CD4-positive, alpha-beta T cell (primary cell): ENCODE measurements at regions of chr9 and their contacts with region 1.

Region 1: GRCh38 chr9:130042833-130043653 is at the start of gene FNBP1:
- DNase-seq: peak; percentile 69 to 93 (median 80)
- ATAC-seq: peak; percentile 66
- H3K4me3 ChIP-seq: peak within 1 kb of the TSS; percentile 93
- H3K4me3 Mint-ChIP-seq: peak within 1 kb of the TSS; percentile 100
- H3K27ac ChIP-seq: peak within 1 kb of the TSS; percentile 84 to 88
- H3K27ac Mint-ChIP-seq: peak within 1 kb of the TSS; percentile 99
- H3K4me1 ChIP-seq: peaks cover 31% of the 10 kb centered on the region
- H3K4me1 Mint-ChIP-seq: peaks cover 72% of the 10 kb centered on the region
- H3K27me3 ChIP-seq: no peaks in the 10 kb centered on the region
- H3K27me3 Mint-ChIP-seq: no peaks in the 10 kb centered on the region
- CTCF ChIP-seq: no peak
- total RNA-seq, gene FNBP1: 166 to 181 TPM

Region 2: GRCh38 chr9:129835021-129835871 is 207.8 kb before region 1 on chr9 and contains the starts of genes C9orf78 and USP20:
- CTCF ChIA-PET with region 1: no interaction called
- POLR2A ChIA-PET with region 1: interaction called, 7 read pairs
- intact Hi-C with region 1: loop called (anchors 2 to 5 kb)
- DNase-seq: peak; percentile 94 to 100 (median 98)
- ATAC-seq: peak; percentile 89
- H3K4me3 ChIP-seq: peak within 1 kb of the TSS; percentile 95
- H3K4me3 Mint-ChIP-seq: peak within 1 kb of the TSS; percentile 100
- H3K27ac ChIP-seq: peak within 1 kb of the TSS; percentile 92 to 94
- H3K27ac Mint-ChIP-seq: peak within 1 kb of the TSS; percentile 92
- H3K4me1 ChIP-seq: peaks cover 55% of the 10 kb centered on the region
- H3K4me1 Mint-ChIP-seq: peaks cover 66% of the 10 kb centered on the region
- H3K27me3 ChIP-seq: no peaks in the 10 kb centered on the region
- H3K27me3 Mint-ChIP-seq: no peaks in the 10 kb centered on the region
- CTCF ChIP-seq: no peak
- total RNA-seq, gene C9orf78: 145 to 159 TPM
- total RNA-seq, gene USP20: 80.4 to 80.9 TPM

Region 3: DNA sequence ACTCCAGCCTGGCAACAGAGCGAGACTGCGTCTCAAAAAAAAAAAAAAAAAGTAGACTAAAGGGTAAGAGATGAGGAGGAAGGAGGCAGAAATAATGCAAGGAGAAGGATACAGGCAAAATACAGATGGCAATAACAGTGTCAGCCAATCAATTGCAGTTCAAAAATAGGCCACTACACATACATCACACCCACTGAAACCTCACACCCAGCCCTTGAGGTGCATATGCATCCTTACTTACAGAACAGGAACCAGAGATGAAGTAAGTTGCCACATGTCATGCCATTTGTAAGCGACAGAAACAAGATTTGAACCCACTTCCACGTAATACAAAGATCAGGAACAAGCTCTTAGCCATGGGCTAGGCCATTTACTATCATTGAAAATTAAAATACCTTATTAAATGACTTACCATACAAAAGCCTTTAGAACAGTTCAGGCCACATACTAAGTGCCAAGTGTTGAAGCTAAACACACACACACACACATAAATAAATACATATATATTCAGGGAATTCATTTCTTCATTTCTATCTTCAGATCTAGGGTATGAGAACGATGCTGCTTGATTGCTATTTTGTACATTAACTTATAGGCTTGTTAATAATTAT is 98.4 kb before region 1 on chr9:
- CTCF ChIA-PET with region 1: interaction called, 7 read pairs
- POLR2A ChIA-PET with region 1: interaction called, 15 read pairs
- intact Hi-C with region 1: no loop called
- DNase-seq: peak in 13 of 14 experiments; percentile 22 to 92 (median 33)
- ATAC-seq: peak; percentile 90
- H3K4me3 ChIP-seq: no peak overlapping the region
- H3K4me3 Mint-ChIP-seq: peak overlapping the region; percentile 56
- H3K27ac ChIP-seq: peak overlapping the region; percentile 12 to 58
- H3K27ac Mint-ChIP-seq: peak overlapping the region; percentile 76
- H3K4me1 ChIP-seq: peaks cover 46% of the 10 kb centered on the region
- H3K4me1 Mint-ChIP-seq: peaks cover 67% of the 10 kb centered on the region
- H3K27me3 ChIP-seq: no peaks in the 10 kb centered on the region
- H3K27me3 Mint-ChIP-seq: no peaks in the 10 kb centered on the region
- CTCF ChIP-seq: no peak

Region 4: GRCh38 chr9:129988607-129989361 is 54.3 kb before region 1 on chr9:
- CTCF ChIA-PET with region 1: interaction called, 10 read pairs
- POLR2A ChIA-PET with region 1: interaction called, 5 read pairs
- intact Hi-C with region 1: loop called in 1 of 2 experiments (anchors 5 kb)
- DNase-seq: peak in 4 of 14 experiments; percentile 50 to 76 (median 64)
- ATAC-seq: peak; percentile 53
- H3K4me3 ChIP-seq: no peak overlapping the region
- H3K4me3 Mint-ChIP-seq: peak overlapping the region; percentile 22
- H3K27ac ChIP-seq: peak overlapping the region; percentile 68 to 86
- H3K27ac Mint-ChIP-seq: peak overlapping the region; percentile 93
- H3K4me1 ChIP-seq: peaks cover 81% of the 10 kb centered on the region
- H3K4me1 Mint-ChIP-seq: peaks cover 65% of the 10 kb centered on the region
- H3K27me3 ChIP-seq: no peaks in the 10 kb centered on the region
- H3K27me3 Mint-ChIP-seq: no peaks in the 10 kb centered on the region
- CTCF ChIP-seq: no peak

Region 5: DNA sequence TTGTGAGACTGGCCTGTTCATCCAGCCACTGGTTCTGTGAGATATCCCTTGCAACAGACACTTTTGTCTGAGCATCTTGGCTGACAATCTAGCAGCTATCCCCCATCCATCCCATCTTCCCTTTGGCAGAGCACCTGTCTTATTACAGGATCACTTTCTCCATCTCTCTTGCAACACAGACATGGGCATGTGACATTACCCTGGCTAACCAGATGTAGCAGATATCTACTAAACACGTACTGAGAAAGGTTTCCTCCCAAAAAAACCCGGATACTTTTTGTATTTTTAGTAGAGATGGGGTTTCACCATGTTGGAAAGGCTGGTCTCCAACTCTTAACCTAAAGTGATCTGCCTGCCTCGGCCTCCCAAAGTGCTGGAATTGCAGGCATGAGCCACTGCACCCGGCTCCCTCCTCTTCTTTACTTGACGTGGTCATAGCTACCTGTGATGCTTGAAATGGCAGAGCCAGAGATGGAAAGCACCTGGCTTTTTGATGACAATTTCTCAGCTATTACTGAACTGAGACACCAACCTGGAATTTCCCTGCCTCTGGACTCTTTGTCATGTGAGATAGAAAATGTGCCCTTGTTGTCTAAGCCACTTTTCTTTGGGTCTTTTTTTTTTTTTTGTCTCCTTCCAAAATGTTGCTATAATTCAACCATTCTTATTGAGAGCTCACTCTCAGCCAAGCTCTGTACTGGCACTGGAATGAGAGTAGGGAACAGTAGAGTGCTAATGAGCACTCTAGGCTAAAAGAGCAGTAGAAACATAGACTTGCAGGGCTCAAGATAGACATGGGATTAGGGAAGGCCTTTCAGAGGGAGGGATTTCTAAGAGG is 32.7 kb before region 1 on chr9:
- CTCF ChIA-PET with region 1: interaction called, 5 read pairs
- POLR2A ChIA-PET with region 1: interaction called, 12 read pairs
- intact Hi-C with region 1: loop called in 1 of 2 experiments (anchors 2 kb)
- DNase-seq: peak in 7 of 14 experiments; percentile 19 to 94 (median 51)
- ATAC-seq: peak; percentile 73
- H3K4me3 ChIP-seq: no peak overlapping the region
- H3K4me3 Mint-ChIP-seq: peak overlapping the region; percentile 54
- H3K27ac ChIP-seq: peak overlapping the region; percentile 90 to 92
- H3K27ac Mint-ChIP-seq: peak overlapping the region; percentile 93
- H3K4me1 ChIP-seq: peaks cover 62% of the 10 kb centered on the region
- H3K4me1 Mint-ChIP-seq: peaks cover 82% of the 10 kb centered on the region
- H3K27me3 ChIP-seq: no peaks in the 10 kb centered on the region
- H3K27me3 Mint-ChIP-seq: no peaks in the 10 kb centered on the region
- CTCF ChIP-seq: no peak

Region 6: GRCh38 chr9:130053504-130054324 is 10.7 kb after region 1 on chr9 and contains the start of gene GPR107:
- CTCF ChIA-PET with region 1: interaction called, 3 read pairs
- POLR2A ChIA-PET with region 1: interaction called, 41 read pairs
- intact Hi-C with region 1: no loop called
- DNase-seq: peak; percentile 47 to 87 (median 67)
- ATAC-seq: peak; percentile 96
- H3K4me3 ChIP-seq: peak within 1 kb of the TSS; percentile 92
- H3K4me3 Mint-ChIP-seq: peak within 1 kb of the TSS; percentile 93
- H3K27ac ChIP-seq: peak within 1 kb of the TSS; percentile 91 to 94
- H3K27ac Mint-ChIP-seq: peak within 1 kb of the TSS; percentile 93
- H3K4me1 ChIP-seq: peaks cover 39% of the 10 kb centered on the region
- H3K4me1 Mint-ChIP-seq: peaks cover 24% of the 10 kb centered on the region
- H3K27me3 ChIP-seq: no peaks in the 10 kb centered on the region
- H3K27me3 Mint-ChIP-seq: no peaks in the 10 kb centered on the region
- CTCF ChIP-seq: no peak
- total RNA-seq, gene GPR107: 18.9 to 19.2 TPM

Region 7: DNA sequence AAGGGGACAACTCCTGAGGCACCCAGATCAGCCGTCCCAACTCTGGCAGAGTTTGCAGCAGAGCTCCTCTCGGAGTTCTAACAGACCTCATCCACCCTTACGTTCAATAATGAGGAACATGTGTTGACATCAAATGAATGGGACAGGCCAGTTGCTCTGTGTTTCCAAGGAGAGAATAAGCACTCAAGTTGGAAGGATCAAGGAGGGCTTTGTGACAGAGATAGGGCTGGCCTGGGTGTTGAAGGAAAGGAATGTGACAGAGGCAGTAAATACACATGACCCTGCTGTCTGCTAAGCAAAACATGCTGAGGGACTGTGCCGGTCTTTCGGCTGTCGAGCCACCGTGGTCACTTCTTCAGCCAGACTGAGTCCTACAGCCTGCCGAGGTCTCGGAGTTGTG is 58.9 kb after region 1 on chr9:
- CTCF ChIA-PET with region 1: no interaction called
- POLR2A ChIA-PET with region 1: no interaction called
- intact Hi-C with region 1: no loop called
- DNase-seq: no peak
- ATAC-seq: no peak
- H3K4me3 ChIP-seq: no peak overlapping the region
- H3K4me3 Mint-ChIP-seq: no peak overlapping the region
- H3K27ac ChIP-seq: no peak overlapping the region
- H3K27ac Mint-ChIP-seq: no peak overlapping the region
- H3K4me1 ChIP-seq: peaks cover 6% of the 10 kb centered on the region
- H3K4me1 Mint-ChIP-seq: peaks cover 6% of the 10 kb centered on the region
- H3K27me3 ChIP-seq: no peaks in the 10 kb centered on the region
- H3K27me3 Mint-ChIP-seq: no peaks in the 10 kb centered on the region
- CTCF ChIP-seq: no peak

Region 8: DNA sequence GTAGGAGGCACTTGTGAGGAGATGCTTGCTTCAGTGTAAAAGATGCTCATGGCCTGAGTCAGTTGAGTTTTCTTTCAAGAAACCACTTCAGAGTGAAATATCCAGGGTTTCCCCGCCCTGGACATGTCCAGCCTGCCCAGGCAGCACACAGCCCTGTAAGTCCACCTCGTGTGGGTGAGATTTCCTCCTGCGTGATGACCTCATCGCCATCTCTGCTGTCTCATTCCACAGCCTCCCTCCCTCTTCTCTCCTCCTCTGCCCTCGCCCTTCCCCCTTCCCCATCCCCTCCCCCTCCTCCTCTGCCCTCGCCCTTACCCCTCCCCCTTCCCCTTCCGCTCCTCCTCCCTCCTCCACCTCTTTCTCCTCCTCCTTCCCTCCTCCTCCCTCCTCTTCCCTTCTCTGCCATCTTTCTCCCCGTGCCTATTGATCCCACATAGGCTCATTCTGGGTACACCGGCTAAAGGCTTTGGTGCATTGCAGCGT is 95.2 kb after region 1 on chr9:
- CTCF ChIA-PET with region 1: no interaction called
- POLR2A ChIA-PET with region 1: no interaction called
- intact Hi-C with region 1: no loop called
- DNase-seq: peak in 3 of 14 experiments; percentile 23 to 52 (median 41)
- ATAC-seq: no peak
- H3K4me3 ChIP-seq: no peak overlapping the region
- H3K4me3 Mint-ChIP-seq: peak overlapping the region; percentile 26
- H3K27ac ChIP-seq: no peak overlapping the region
- H3K27ac Mint-ChIP-seq: peak overlapping the region; percentile 28
- H3K4me1 ChIP-seq: peaks cover 26% of the 10 kb centered on the region
- H3K4me1 Mint-ChIP-seq: peaks cover 40% of the 10 kb centered on the region
- H3K27me3 ChIP-seq: no peaks in the 10 kb centered on the region
- H3K27me3 Mint-ChIP-seq: no peaks in the 10 kb centered on the region
- CTCF ChIP-seq: no peak

Region 9: GRCh38 chr9:130487500-130487899 is 444.5 kb after region 1 on chr9:
- CTCF ChIA-PET with region 1: no interaction called
- POLR2A ChIA-PET with region 1: no interaction called
- intact Hi-C with region 1: no loop called
- DNase-seq: no peak
- ATAC-seq: no peak
- H3K4me3 ChIP-seq: no peak overlapping the region
- H3K4me3 Mint-ChIP-seq: no peak overlapping the region
- H3K27ac ChIP-seq: no peak overlapping the region
- H3K27ac Mint-ChIP-seq: no peak overlapping the region
- H3K4me1 ChIP-seq: no peaks in the 10 kb centered on the region
- H3K4me1 Mint-ChIP-seq: no peaks in the 10 kb centered on the region
- H3K27me3 ChIP-seq: peaks cover 8 to 14% of the 10 kb centered on the region in 2 experiments
- H3K27me3 Mint-ChIP-seq: peaks cover 24% of the 10 kb centered on the region
- CTCF ChIP-seq: no peak